ENCODE measurements at regions of chr6 and their contacts with region 1.

Region 1: DNA sequence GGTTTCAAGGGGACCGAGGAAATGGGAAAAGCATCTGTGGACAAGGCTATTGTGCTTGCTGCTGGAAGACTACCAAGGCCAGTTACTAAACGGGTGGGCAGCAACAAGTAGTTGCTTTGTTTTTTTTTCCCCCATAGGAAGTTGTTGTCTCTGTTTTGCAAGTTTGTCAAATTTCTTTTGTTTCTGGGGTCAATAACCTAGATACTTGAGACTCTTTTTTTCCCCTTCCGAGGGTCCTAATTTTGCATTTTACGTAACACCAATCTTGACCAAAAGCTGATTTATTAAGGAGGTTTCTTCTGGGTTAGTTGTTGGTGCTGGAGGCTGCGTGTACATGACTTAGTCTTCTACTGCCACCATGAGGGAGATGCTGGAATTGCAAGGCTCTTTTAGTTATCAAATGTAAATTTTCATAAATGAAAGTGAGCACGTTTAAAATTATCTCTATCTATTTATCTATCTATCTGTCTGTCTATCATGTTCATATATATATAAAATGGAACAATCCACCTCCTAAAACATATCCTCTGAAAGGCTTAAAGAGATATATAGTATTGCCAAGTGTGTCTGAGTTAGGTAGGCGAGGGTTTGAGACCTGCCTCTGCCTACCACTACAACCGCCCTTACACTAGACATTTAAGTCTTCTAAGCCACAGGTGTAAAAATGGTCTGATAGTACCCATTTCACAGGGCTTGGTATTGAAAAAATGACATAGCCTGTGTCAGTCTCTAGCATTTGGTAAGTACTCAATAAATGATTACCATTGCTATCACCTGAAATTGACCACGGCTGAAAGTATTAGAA is 60.2 kb downstream of the GCLC start:
- DNase-seq: peak; percentile 68 to 75
- H3K4me3 ChIP-seq: no peak overlapping the region
- H3K27ac ChIP-seq: no peak overlapping the region
- H3K4me1 ChIP-seq: no peaks in the 10 kb centered on the region
- H3K27me3 ChIP-seq: peaks cover 3% of the 10 kb centered on the region
- CTCF ChIP-seq: peak; percentile 79 to 96 (median 93)
- POLR2A ChIP-seq: no peak

Region 2: DNA sequence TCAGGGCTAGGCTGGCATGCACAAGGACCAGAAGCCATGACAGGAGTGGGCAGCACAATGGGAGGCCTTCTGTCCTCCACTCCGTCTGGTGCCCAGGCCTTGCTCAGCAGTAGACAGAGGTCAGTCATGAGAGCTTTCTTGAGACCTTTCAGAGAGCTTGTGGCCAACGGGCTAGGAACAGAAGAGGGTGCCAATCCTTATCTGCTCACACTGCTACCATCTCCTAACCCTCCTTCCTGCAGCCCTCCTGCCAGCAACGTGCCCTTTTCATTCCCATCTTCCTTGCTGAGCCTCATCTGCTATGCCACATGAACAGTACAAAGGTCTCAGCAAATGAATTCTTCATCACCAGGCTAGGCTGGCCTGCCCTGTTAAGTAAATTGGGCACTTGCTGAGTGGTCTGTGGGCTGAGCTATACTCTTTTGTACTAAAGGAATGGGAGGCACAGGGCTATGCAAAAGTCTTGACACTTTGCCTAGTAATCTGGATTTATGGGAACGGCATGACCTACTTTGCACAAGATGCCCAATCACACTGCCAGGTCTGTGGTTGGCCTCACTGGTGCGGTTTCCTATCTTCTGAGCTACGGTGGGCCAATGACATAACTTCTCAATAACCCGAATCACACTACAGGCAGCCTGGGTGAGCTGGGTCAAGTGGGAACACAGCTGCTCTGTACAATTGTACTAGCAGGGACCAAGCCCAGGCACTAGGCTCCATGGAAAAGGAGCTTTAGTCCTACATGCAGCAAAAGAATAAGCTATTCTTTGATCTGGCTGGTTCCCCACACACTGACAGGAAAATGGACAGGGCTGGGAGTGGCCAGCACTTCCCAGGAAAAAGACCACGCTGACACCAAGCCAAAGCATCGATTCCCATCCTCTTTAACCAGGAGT is 183.8 kb before region 1 on chr6:
- intact Hi-C with region 1: no loop called
- DNase-seq: no peak
- H3K4me3 ChIP-seq: no peak overlapping the region
- H3K27ac ChIP-seq: peak overlapping the region in 1 of 3 donors; percentile 51
- H3K4me1 ChIP-seq: peaks cover 36 to 41% of the 10 kb centered on the region in 2 donors
- H3K27me3 ChIP-seq: no peaks in the 10 kb centered on the region
- CTCF ChIP-seq: no peak
- POLR2A ChIP-seq: no peak

Region 3: GRCh38 chr6:53437557-53438202 is 47.0 kb before region 1 on chr6:
- intact Hi-C with region 1: loop called (anchors 5 kb)
- DNase-seq: peak; percentile 32 to 37
- H3K4me3 ChIP-seq: no peak overlapping the region
- H3K27ac ChIP-seq: no peak overlapping the region
- H3K4me1 ChIP-seq: no peaks in the 10 kb centered on the region
- H3K27me3 ChIP-seq: no peaks in the 10 kb centered on the region
- CTCF ChIP-seq: peak in 5 of 6 experiments; percentile 22 to 77 (median 55)
- POLR2A ChIP-seq: no peak

Region 4: GRCh38 chr6:53811082-53811481 is 326.4 kb after region 1 on chr6:
- intact Hi-C with region 1: no loop called
- DNase-seq: peak; percentile 87 to 92
- H3K4me3 ChIP-seq: no peak overlapping the region
- H3K27ac ChIP-seq: peak overlapping the region; percentile 72 to 84 (median 73)
- H3K4me1 ChIP-seq: peaks cover 31 to 58% of the 10 kb centered on the region in 2 donors
- H3K27me3 ChIP-seq: no peaks in the 10 kb centered on the region
- CTCF ChIP-seq: no peak
- POLR2A ChIP-seq: peak in 1 of 2 donors; percentile 42